ENCODE measurements at regions of chr14 and their contacts with region 1.

Region 1: DNA sequence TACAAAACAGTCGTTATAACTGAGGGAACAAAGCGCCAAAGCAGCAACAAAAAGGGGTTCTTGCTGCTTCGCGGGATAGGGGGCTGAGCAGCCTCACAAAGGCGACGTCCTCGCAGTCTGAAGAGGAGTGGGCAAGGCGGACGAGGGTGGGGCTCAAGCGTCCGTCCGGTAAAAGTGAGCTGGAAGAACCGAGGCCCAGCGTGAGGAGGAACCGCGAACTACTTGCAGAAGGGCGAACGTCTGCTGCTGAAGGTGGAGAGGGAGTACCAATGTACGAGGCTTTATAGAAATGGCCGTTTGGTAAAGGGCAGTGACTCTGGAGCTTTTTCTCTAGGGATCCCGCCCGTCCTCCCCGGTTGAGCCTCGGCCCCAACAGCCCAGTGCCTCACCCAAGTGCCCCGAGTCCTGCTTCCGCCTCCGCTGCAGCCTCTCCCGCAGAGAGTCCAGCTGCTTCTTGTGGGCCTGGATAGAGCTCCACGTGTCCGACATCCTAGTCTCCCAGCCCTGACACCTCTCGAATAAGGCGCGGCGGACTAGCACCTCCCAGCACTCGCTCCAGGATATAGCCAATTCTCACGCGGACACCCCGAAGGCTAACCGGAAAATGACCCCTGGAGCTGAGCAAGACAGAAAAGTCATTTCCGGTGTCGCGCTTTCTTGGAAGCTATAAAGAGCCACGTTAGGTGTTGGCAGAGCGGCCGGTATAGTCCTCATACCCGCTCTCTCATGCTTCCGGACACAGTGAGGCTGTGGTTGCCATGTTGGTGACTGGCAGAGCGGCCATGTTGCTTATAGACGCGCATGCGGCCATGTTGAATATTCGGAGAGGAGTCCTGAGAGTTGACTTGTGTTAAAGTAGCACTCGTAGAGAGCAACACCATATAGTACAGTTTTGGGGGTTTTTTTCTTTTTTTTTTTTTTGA is at the start of gene METTL3:
- DNase-seq: peak; percentile 93
- H3K4me3 Mint-ChIP-seq: peak within 1 kb of the TSS; percentile 99
- H3K27ac Mint-ChIP-seq: peak within 1 kb of the TSS; percentile 93
- H3K4me1 Mint-ChIP-seq: peaks cover 27% of the 10 kb centered on the region
- H3K27me3 Mint-ChIP-seq: peaks cover 12% of the 10 kb centered on the region
- total RNA-seq, gene METTL3: 75.1 and 77.7 TPM in 2 replicates

Region 2: DNA sequence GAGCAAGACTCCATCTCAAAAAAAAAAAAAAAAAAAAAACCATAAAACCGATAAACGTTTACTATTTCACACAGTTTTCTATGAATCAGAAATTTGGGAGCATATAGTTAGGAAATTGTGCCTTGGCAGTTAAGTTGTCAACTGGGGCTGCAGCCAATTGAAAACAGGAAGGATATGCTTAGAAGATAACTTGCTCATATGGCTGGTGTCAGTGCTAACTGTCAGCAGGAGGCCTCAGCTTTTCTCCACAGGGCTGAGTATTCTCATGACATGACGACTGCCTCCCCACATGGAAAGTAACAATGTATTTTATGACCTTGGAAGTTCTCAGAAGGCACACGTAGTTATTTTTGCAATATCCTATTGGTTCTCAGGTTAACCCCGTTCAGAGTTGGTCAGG is 325.5 kb before region 1 on chr14:
- intact Hi-C with region 1: no loop called
- DNase-seq: no peak
- H3K4me3 Mint-ChIP-seq: no peak overlapping the region
- H3K27ac Mint-ChIP-seq: peak overlapping the region; percentile 43
- H3K4me1 Mint-ChIP-seq: no peaks in the 10 kb centered on the region
- H3K27me3 Mint-ChIP-seq: peaks cover 4% of the 10 kb centered on the region

Region 3: DNA sequence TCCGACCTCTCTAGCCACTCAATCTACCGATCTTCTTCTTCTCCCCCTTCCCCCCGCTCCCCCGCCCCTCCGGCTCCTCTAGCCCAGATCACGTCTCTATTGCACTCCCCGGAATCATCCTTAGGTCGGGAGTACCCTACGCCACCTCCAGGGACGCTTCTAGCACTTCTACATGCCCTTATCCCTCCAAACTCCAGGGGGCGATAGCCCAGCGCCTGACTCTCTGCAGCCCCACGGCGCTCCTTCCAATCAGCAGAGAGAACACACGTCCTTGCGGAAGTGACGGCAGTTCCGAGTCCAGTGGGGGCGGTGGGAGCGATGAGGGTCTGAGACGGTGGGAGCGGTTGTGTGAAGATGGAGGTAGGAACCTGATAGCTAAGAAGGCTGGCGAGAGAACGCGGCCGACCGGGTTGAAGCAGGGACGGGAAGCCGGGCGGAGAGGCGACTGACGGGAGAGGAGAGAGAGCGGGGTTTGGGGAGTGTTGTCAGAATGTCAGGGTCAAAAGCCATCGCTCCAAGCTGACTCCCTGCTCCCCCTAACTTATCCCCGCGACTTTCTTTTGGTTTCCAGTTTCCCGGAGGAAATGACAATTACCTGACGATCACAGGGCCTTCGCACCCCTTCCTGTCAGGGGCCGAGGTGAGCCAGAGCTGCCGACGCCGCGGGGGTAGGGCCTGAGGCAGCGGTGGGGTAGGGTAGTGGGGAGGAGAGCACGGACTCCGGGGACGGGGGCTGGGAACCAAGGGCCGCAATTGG is 33.9 kb before region 1 on chr14 and contains the starts of genes RAB2B and TOX4:
- intact Hi-C with region 1: loop called (anchors 1 kb)
- DNase-seq: peak; percentile 96
- H3K4me3 Mint-ChIP-seq: peak within 1 kb of the TSS; percentile 100
- H3K27ac Mint-ChIP-seq: peak within 1 kb of the TSS; percentile 99
- H3K4me1 Mint-ChIP-seq: peaks cover 35% of the 10 kb centered on the region
- H3K27me3 Mint-ChIP-seq: peaks cover 2% of the 10 kb centered on the region
- total RNA-seq, gene RAB2B: 30.3 and 32.5 TPM in 2 replicates
- total RNA-seq, gene TOX4: 77.5 and 86.6 TPM in 2 replicates

Region 4: GRCh38 chr14:21498553-21499526 is 12.2 kb before region 1 on chr14:
- intact Hi-C with region 1: loop called (anchors 1 kb)
- DNase-seq: no peak
- H3K4me3 Mint-ChIP-seq: no peak overlapping the region
- H3K27ac Mint-ChIP-seq: peak overlapping the region; percentile 36
- H3K4me1 Mint-ChIP-seq: peaks cover 40% of the 10 kb centered on the region
- H3K27me3 Mint-ChIP-seq: no peaks in the 10 kb centered on the region

Region 5: DNA sequence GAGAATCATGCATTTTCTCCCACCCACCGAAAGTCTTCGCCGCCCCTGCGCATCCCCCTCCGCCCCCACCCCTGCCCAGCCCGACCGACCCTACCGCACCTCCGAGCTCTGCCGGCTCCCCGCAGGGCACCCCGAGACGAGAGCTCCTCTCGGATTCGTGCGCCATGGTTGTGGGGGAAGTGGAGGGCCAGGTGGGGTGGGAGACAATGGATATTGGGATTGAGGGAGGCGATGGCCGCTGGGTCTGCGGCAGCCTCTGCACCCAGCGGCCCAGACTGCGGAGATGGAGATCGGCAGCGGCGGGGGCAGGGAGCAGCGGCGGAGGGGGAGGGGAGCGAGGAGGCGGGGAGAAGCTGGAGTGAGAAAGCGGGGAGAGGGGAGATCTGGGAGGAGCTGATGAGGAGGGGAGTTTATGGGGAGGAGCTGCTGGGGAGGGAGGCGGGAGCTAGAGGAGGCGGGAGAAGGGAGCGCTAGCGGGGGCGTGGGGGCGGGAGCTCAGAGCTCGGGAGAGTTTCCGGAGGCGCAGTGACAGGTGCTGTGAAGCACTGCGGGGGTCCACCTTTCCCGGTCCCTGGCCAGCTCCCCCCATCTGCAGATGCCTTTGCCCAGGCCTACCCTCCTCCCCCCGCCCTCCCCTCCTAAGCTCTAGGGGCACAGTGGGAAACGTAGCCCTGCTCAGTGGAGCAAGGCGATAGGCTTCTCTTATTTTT is 15.1 kb after region 1 on chr14 and contains the start of gene SALL2:
- intact Hi-C with region 1: loop called (anchors 1 kb)
- DNase-seq: peak; percentile 35
- H3K4me3 Mint-ChIP-seq: peak within 1 kb of the TSS; percentile 81
- H3K27ac Mint-ChIP-seq: peak within 1 kb of the TSS; percentile 68
- H3K4me1 Mint-ChIP-seq: peaks cover 5% of the 10 kb centered on the region
- H3K27me3 Mint-ChIP-seq: peaks cover 7% of the 10 kb centered on the region
- total RNA-seq, gene SALL2: 1.3 and 1.6 TPM in 2 replicates

Region 6: DNA sequence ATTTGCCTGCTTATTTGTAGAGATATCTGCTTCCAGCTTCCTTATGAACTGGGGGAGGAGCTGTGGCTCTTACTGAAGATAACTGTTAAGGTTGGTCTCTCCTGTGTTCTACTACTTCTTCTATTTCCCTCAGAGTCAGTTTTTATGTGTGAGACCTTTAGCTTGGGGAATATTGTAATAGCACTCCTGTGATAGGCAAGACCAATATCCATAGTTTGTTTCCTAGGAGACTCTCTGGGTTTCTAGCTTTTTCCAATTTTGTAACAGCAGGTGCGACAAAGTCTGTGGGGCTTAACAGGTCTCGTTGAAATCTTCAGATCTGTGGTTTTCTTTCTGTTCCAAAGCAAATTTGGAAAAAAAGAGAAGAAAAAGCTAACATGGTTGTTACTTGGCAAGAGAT is 69.0 kb after region 1 on chr14 and contains the start of gene OR10G3:
- intact Hi-C with region 1: no loop called
- DNase-seq: no peak
- H3K4me3 Mint-ChIP-seq: no peak within 1 kb of the TSS
- H3K27ac Mint-ChIP-seq: no peak within 1 kb of the TSS
- H3K4me1 Mint-ChIP-seq: peaks cover 3% of the 10 kb centered on the region
- H3K27me3 Mint-ChIP-seq: peaks cover 8% of the 10 kb centered on the region
- total RNA-seq, gene OR10G3: not detected in 2 replicates

Measured in activated T-helper 1 cell treated with anti-CD3 and anti-CD28 coated beads, Interleukin-12 subunit alpha, Interleukin-12 subunit beta, Interleukin-2, Interleukin-4 antibody, amounts not matched to agents 30 ng/mL and 10 ng/mL and 1 ng/mL, durations not matched to agents 14 hours and 24 hours and 36 hours (primary cell).